ENCODE measurements at regions of chr16 and their contacts with region 1.

Region 1: GRCh38 chr16:28846080-28846932 is at the start of gene TUFM:
- DNase-seq: peak; percentile 96 to 99 (median 98)
- ATAC-seq: peak; percentile 96
- H3K4me3 ChIP-seq: peak within 1 kb of the TSS; percentile 83 to 100
- H3K4me3 Mint-ChIP-seq: peak within 1 kb of the TSS; percentile 91
- H3K27ac ChIP-seq: peak within 1 kb of the TSS; percentile 78 to 93
- H3K27ac Mint-ChIP-seq: peak within 1 kb of the TSS; percentile 94
- H3K4me1 ChIP-seq: peaks cover 23% of the 10 kb centered on the region
- H3K4me1 Mint-ChIP-seq: peaks cover 32% of the 10 kb centered on the region
- H3K27me3 ChIP-seq: no peaks in the 10 kb centered on the region
- H3K27me3 Mint-ChIP-seq: no peaks in the 10 kb centered on the region
- CTCF ChIP-seq: peak; percentile 75
- total RNA-seq, gene TUFM: 111 to 119 TPM

Region 2: DNA sequence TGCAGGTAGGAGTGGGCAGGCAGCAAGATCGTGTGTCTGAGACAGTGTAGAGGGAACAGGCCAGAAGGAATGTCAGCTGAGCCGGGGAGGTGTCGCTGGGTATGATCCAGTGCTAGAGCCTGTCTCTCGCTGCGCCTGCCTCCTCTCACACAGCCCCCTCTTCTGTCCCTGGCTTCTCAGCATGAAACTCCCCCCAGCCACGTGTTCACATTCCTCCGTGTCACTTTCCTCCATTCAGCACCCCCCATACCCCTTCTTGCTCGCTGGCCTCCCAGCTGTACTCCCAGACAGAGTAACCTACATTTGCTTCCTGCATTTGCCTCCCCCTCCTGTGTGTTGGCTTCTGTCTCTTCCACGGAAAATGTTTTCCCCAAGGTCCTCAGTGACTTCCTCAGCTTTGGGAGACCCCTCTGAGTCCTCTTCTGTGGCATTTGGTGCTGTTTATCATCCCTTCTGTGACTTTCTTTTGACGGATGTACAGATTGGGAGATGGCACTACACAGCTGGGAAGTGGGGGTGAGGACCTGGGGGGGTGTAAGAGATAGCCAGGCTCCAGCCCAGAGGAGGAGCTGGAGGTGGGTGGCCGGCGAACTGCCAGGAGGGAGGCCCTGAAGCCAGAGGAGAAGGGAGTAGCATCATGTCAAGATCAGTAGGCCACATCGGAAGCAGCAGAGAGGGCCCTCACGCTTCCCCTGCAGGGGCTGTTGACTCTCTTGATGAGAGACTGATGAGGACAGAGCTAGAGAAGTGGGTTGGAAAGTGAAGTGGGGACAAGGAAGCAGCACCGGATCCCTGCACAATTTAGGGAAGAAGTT is 273.4 kb before region 1 on chr16:
- CTCF ChIA-PET with region 1: no interaction called
- POLR2A ChIA-PET with region 1: no interaction called
- intact Hi-C with region 1: no loop called
- DNase-seq: no peak
- ATAC-seq: no peak
- H3K4me3 ChIP-seq: no peak overlapping the region
- H3K4me3 Mint-ChIP-seq: no peak overlapping the region
- H3K27ac ChIP-seq: no peak overlapping the region
- H3K27ac Mint-ChIP-seq: peak overlapping the region; percentile 77
- H3K4me1 ChIP-seq: no peaks in the 10 kb centered on the region
- H3K4me1 Mint-ChIP-seq: peaks cover 46% of the 10 kb centered on the region
- H3K27me3 ChIP-seq: no peaks in the 10 kb centered on the region
- H3K27me3 Mint-ChIP-seq: no peaks in the 10 kb centered on the region
- CTCF ChIP-seq: no peak

Region 3: GRCh38 chr16:28823872-28824716 is 22.2 kb before region 1 on chr16:
- CTCF ChIA-PET with region 1: interaction called, 15 read pairs
- POLR2A ChIA-PET with region 1: interaction called, 25 read pairs
- intact Hi-C with region 1: loop called (anchors 1 kb)
- DNase-seq: peak; percentile 88 to 97 (median 95)
- ATAC-seq: peak; percentile 67
- H3K4me3 ChIP-seq: peak overlapping the region; percentile 74 to 94
- H3K4me3 Mint-ChIP-seq: peak overlapping the region; percentile 97
- H3K27ac ChIP-seq: peak overlapping the region; percentile 93 to 94
- H3K27ac Mint-ChIP-seq: peak overlapping the region; percentile 99
- H3K4me1 ChIP-seq: peaks cover 30% of the 10 kb centered on the region
- H3K4me1 Mint-ChIP-seq: peaks cover 43% of the 10 kb centered on the region
- H3K27me3 ChIP-seq: no peaks in the 10 kb centered on the region
- H3K27me3 Mint-ChIP-seq: no peaks in the 10 kb centered on the region
- CTCF ChIP-seq: peak; percentile 21

Region 4: GRCh38 chr16:28879841-28880588 is 33.7 kb after region 1 on chr16:
- CTCF ChIA-PET with region 1: no interaction called
- POLR2A ChIA-PET with region 1: interaction called, 12 read pairs
- intact Hi-C with region 1: loop called (anchors 1 kb)
- DNase-seq: peak; percentile 78 to 91 (median 89)
- ATAC-seq: peak; percentile 97
- H3K4me3 ChIP-seq: peak overlapping the region; percentile 85 to 88
- H3K4me3 Mint-ChIP-seq: peak overlapping the region; percentile 86
- H3K27ac ChIP-seq: peak overlapping the region in 1 of 2 experiments; percentile 39
- H3K27ac Mint-ChIP-seq: no peak overlapping the region
- H3K4me1 ChIP-seq: peaks cover 9% of the 10 kb centered on the region
- H3K4me1 Mint-ChIP-seq: peaks cover 16% of the 10 kb centered on the region
- H3K27me3 ChIP-seq: no peaks in the 10 kb centered on the region
- H3K27me3 Mint-ChIP-seq: peaks cover 14% of the 10 kb centered on the region
- CTCF ChIP-seq: no peak

Region 5: DNA sequence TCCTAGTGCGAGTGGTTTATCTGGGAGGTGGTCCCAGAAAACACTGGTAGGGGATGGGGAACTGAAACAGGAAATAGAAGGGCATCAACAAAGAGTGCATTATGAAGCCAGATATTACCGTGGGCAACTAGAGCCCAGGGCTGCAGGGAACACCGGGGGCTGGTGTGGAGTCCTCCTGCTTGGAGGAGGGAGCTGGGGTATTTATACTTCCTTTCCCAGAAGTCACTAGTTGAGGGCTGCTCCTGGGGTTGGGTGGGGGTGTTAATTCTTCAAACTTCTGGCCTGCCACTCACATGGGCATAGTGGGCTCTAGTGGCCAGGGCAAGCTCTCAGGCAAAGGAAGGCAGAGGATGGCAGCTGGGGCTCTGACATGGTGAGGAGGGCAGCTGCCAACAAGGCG is 153.3 kb after region 1 on chr16:
- CTCF ChIA-PET with region 1: no interaction called
- POLR2A ChIA-PET with region 1: no interaction called
- intact Hi-C with region 1: no loop called
- DNase-seq: no peak
- ATAC-seq: no peak
- H3K4me3 ChIP-seq: no peak overlapping the region
- H3K4me3 Mint-ChIP-seq: no peak overlapping the region
- H3K27ac ChIP-seq: no peak overlapping the region
- H3K27ac Mint-ChIP-seq: no peak overlapping the region
- H3K4me1 ChIP-seq: peaks cover 4% of the 10 kb centered on the region
- H3K4me1 Mint-ChIP-seq: peaks cover 14% of the 10 kb centered on the region
- H3K27me3 ChIP-seq: no peaks in the 10 kb centered on the region
- H3K27me3 Mint-ChIP-seq: no peaks in the 10 kb centered on the region
- CTCF ChIP-seq: no peak